ENCODE measurements at regions of chr21 and their contacts with region 1.

Region 1: DNA sequence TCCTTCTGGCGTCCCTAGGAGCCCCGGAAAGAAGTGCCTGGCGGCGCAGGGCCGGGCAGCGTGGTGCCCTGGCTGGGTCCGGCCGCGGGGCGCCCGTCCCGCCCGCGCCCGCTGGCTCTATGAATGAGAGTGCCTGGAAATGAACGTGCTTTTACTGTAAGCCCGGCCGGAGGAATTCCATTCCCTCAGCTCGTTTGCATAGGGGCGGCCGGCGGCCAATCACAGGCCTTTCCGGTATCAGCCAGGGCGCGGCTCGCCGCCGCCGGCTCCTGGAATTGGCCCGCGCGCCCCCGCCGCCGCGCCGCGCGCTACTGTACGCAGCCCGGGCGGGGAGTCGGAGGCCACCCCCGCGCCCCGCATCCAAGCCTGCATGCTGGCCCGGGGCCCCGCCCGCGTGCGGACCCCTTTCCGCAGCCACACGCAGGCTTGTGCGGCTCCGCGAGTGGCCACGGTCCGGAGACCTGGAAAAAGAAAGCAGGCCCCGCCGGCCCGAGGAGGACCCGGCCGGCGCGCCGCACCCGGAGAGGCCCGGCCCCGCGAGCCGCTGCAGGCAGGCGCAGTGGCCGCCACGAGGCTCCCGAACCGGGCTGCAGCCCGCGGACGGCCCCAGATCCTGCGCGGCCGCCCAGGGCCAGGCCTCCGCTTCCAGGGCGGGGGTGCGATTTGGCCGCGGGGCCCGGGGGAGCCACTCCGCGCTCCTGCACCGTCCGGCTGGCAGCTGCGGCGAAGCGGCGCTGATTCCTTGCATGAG is 160.4 kb downstream of the RUNX1 start:
- DNase-seq: peak; percentile 76
- H3K4me3 ChIP-seq: peak overlapping the region; percentile 97
- H3K27me3 ChIP-seq: no peaks in the 10 kb centered on the region
- CTCF ChIP-seq: no peak

Region 2: GRCh38 chr21:34807146-34807880 is 81.4 kb before region 1 on chr21:
- CTCF ChIA-PET with region 1: no interaction called
- POLR2A ChIA-PET with region 1: no interaction called
- DNase-seq: peak; percentile 70
- H3K4me3 ChIP-seq: no peak overlapping the region
- H3K27me3 ChIP-seq: no peaks in the 10 kb centered on the region
- CTCF ChIP-seq: no peak

Region 3: DNA sequence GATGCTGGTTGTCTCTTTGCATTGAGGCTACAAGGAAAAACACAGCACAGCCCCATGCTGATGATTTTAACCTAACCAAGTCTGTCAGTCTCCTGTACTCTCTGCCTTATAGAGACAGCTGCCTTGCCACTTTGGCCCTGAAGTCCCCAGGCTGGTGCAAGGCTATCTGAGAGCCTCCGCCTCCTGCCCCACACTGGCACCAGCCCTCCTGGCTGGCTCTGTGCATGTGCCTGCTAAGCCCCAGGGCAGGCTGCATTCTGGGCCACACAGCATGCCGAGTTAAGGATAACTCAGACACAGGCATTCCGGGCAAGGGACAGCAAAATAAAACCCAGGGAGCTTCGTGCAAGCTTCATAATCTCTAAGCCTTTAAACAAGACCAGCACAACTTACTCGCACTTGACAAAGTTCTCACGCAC is 159.4 kb after region 1 on chr21:
- CTCF ChIA-PET with region 1: interaction called, 12 read pairs
- POLR2A ChIA-PET with region 1: interaction called, 13 read pairs
- DNase-seq: no peak
- H3K4me3 ChIP-seq: peak overlapping the region; percentile 40
- H3K27me3 ChIP-seq: no peaks in the 10 kb centered on the region
- CTCF ChIP-seq: no peak

Region 4: DNA sequence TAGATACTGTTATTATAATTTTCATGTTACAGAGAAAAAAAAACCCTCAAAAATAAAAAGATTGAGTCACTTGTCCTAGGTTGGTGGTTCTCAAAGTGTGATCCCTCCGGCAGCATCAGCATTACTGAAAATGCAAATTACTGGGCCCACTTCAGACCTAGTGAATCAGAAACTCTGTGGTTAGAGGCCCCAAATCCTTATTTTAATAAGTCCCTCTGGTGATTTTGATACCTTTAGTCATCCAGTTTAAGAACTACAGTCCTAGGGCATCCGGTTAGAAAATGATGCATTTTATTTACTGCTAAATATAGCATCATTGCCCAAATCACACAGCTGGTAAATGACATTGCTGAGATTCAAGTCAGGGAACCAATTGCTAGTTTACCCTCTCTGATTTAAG is 364.1 kb after region 1 on chr21:
- CTCF ChIA-PET with region 1: interaction called, 4 read pairs
- POLR2A ChIA-PET with region 1: interaction called, 13 read pairs
- DNase-seq: no peak
- H3K4me3 ChIP-seq: no peak overlapping the region
- H3K27me3 ChIP-seq: no peaks in the 10 kb centered on the region
- CTCF ChIP-seq: no peak

Region 5: DNA sequence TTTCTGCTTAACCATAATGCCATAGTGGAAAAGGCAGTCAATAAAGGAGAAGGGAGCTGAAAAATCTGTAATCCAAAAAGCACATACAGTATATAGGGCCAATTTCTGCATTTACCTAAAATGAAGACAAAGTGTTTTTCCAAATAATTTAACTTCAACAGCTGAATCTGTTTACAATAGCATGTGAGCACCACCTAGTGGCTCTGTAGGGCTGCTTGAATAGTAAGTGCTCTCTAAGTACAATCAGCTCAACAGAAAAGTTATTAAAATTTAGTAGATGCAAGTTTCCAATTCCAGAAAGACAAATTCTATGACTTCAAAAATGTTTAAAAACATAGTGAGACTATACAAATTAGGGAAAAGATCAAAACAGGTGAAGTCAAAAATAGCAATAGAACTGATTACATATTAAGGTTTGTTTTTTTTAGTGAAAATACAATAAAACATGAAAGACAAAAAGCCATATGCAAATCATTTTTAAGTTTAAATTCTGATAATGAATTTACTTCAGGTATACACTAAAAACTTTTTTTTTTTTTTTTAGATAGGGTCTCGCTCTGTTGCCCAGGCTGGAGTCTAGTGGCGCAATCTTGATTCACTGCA is 951.6 kb after region 1 on chr21:
- CTCF ChIA-PET with region 1: interaction called, 12 read pairs
- POLR2A ChIA-PET with region 1: interaction called, 3 read pairs
- DNase-seq: peak; percentile 46
- H3K4me3 ChIP-seq: no peak overlapping the region
- H3K27me3 ChIP-seq: no peaks in the 10 kb centered on the region
- CTCF ChIP-seq: peak; percentile 82